Panc1 (cell line): ENCODE measurements at regions of chr11 and their contacts with region 1.

Region 1: DNA sequence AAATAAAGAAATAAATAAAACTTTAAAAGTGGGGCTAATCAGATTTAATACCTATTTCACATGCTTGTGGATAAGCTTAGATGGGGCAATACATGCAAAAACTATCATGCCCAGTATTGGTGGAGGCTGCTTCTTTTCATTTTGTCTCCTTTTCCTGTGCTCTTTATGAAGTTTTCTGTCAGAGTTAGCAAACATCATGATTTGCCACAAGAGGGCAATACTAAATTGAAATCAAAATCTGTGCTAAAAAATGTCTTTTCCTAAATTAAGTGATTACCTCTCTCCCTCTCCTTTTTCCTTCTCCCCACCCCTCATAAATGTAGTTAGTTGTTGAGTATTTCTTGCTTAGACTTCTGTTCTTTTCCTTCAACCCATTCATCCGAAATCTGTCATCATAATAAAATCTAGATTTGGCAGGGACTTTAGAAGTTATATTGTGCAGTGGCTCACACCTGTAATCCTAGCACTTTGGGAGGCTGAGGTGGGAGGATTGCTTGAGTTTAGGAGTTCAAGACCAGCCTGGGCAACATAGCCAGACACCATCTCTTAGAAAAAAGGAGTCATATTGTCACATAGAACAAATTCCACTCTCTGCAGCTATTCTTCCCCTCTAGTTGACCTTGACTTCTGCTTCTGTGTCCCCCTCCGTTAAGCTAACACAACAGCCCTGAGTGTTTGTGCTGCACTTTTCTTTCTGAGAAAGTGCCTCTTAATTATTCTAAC is 4.7 kb upstream of the ARHGAP42 start:
- DNase-seq: no peak
- ATAC-seq: no peak
- H3K4me3 ChIP-seq: no peak overlapping the region
- H3K27ac ChIP-seq: no peak overlapping the region
- H3K4me1 ChIP-seq: peaks cover 19% of the 10 kb centered on the region
- H3K27me3 ChIP-seq: no peaks in the 10 kb centered on the region
- CTCF ChIP-seq: peak; percentile 77

Region 2: DNA sequence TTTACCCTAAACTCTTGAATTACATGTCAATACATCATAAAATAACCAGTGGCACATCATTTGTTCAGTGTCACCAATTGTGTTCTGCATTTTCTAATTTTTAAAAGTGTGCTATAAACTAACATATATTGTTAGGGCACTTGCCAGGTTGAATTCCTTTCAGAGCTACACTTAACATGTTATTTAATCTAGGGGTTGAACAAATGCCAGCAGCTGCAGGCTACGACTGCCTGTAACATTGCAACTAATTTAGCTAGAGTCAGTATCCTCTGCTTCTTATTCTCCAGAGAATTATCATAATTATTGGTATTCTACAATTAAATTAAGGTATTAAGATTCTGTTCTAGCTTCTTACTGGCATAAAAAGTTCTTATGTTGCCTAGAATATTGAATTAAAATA is 41.8 kb before region 1 on chr11:
- CTCF ChIA-PET with region 1: no interaction called
- POLR2A ChIA-PET with region 1: no interaction called
- in situ Hi-C with region 1: no loop called
- intact Hi-C with region 1: no loop called
- DNase-seq: no peak
- ATAC-seq: no peak
- H3K4me3 ChIP-seq: no peak overlapping the region
- H3K27ac ChIP-seq: no peak overlapping the region
- H3K4me1 ChIP-seq: no peaks in the 10 kb centered on the region
- H3K27me3 ChIP-seq: no peaks in the 10 kb centered on the region
- CTCF ChIP-seq: no peak

Region 3: GRCh38 chr11:100855466-100856067 is 173.2 kb after region 1 on chr11:
- CTCF ChIA-PET with region 1: interaction called, 6 read pairs
- POLR2A ChIA-PET with region 1: no interaction called
- in situ Hi-C with region 1: no loop called
- intact Hi-C with region 1: loop called (anchors 2 kb)
- DNase-seq: no peak
- ATAC-seq: no peak
- H3K4me3 ChIP-seq: no peak overlapping the region
- H3K27ac ChIP-seq: no peak overlapping the region
- H3K4me1 ChIP-seq: no peaks in the 10 kb centered on the region; the same call in none of the 2 replicates
- H3K27me3 ChIP-seq: no peaks in the 10 kb centered on the region
- CTCF ChIP-seq: peak; percentile 69; the same call in 1 of the 2 replicates

Region 4: DNA sequence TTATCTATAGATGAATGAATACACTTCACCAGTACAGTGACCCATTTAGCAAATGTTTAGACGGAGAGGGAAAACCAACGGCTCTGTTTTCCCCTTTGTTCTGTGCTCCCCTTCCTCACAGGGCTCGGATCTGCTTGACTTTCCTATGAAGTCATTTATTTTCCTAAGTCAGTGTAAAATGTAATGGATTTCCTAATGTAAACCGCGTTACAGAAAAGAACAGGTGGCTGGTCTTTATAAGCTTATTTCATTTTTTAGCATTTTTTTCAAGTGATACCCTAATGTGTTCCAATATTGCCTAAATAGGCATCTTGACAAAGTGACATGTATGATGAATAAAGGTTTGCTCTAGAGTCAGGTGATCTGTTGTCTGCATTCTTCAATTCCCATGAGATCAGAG is 239.7 kb after region 1 on chr11:
- CTCF ChIA-PET with region 1: interaction called, 14 read pairs
- POLR2A ChIA-PET with region 1: no interaction called
- in situ Hi-C with region 1: no loop called
- intact Hi-C with region 1: no loop called
- DNase-seq: no peak
- ATAC-seq: no peak
- H3K4me3 ChIP-seq: no peak overlapping the region
- H3K27ac ChIP-seq: no peak overlapping the region
- H3K4me1 ChIP-seq: peaks cover 11% of the 10 kb centered on the region
- H3K27me3 ChIP-seq: no peaks in the 10 kb centered on the region
- CTCF ChIP-seq: no peak

Region 5: GRCh38 chr11:100930185-100930778 is 247.9 kb after region 1 on chr11:
- CTCF ChIA-PET with region 1: no interaction called
- POLR2A ChIA-PET with region 1: no interaction called
- in situ Hi-C with region 1: no loop called
- intact Hi-C with region 1: loop called (anchors 2 kb)
- DNase-seq: no peak
- ATAC-seq: peak; percentile 66; the same call in 1 of the 2 replicates
- H3K4me3 ChIP-seq: no peak overlapping the region
- H3K27ac ChIP-seq: no peak overlapping the region
- H3K4me1 ChIP-seq: peaks cover 14% of the 10 kb centered on the region
- H3K27me3 ChIP-seq: no peaks in the 10 kb centered on the region
- CTCF ChIP-seq: peak; percentile 73; the same call in 1 of the 2 replicates